Esophagus muscularis mucosa (tissue), 4 donors: ENCODE measurements at regions of chr14 and their contacts with region 1.

Region 1: GRCh38 chr14:70317969-70318634 is 41.4 kb downstream of the COX16 start:
- DNase-seq: no peak
- H3K4me3 ChIP-seq: no peak overlapping the region
- H3K27ac ChIP-seq: no peak overlapping the region
- H3K4me1 ChIP-seq: no peaks in the 10 kb centered on the region
- H3K27me3 ChIP-seq: peaks cover 0 to 6% (median 0%) of the 10 kb centered on the region in 4 donors
- CTCF ChIP-seq: peak; percentile 28 to 44 (median 43)
- EP300 ChIP-seq: no peak
- POLR2A ChIP-seq: no peak

Region 2: DNA sequence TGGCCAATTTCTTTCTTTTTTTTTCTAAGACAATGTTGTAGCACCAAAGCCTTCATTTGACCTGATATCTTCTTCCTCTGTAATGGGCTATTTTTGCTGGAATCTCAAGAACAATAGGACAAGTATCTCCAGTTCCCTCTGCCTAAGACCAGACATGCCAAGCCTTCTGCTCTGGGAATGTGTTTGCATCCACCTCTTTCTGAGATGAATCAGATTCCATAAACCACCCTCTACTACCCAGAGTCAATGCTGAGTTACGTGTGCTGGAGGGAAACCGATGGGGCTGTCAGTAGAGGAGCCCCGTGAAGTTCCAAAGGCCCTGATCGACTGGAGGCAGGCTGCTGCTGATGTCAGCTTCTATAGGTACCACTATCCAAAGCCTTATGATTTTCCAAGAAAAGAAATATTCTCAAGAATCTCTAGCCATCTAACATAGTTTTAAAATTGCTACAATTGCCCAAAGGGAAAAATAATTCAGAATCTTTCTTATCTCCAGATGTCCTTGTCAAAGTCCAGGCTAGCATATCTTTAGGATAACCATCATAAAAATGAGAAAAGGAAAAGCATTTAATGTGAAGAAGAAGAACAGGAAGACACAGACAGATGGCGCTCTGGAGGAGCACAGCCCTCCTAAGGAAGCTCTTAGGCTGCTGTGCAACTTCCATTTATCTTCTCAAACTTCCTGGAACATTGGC is 231.3 kb before region 1 on chr14:
- intact Hi-C with region 1: loop called (anchors 5 kb)
- DNase-seq: peak; percentile 47
- H3K4me3 ChIP-seq: no peak overlapping the region
- H3K27ac ChIP-seq: no peak overlapping the region
- H3K4me1 ChIP-seq: no peaks in the 10 kb centered on the region
- H3K27me3 ChIP-seq: peaks cover 0 to 37% (median 0%) of the 10 kb centered on the region in 4 donors
- CTCF ChIP-seq: peak; percentile 36 to 48 (median 47)
- EP300 ChIP-seq: no peak
- POLR2A ChIP-seq: no peak

Region 3: GRCh38 chr14:70292716-70293115 is 25.4 kb before region 1 on chr14:
- intact Hi-C with region 1: no loop called
- DNase-seq: no peak
- H3K4me3 ChIP-seq: no peak overlapping the region
- H3K27ac ChIP-seq: no peak overlapping the region
- H3K4me1 ChIP-seq: no peaks in the 10 kb centered on the region
- H3K27me3 ChIP-seq: no peaks in the 10 kb centered on the region
- CTCF ChIP-seq: no peak
- EP300 ChIP-seq: no peak
- POLR2A ChIP-seq: no peak